ENCODE measurements at regions of chr1 and their contacts with region 1.

Region 1: GRCh38 chr1:111406321-111406768 is 21.2 kb downstream of the OVGP1 start:
- DNase-seq: peak; percentile 97
- H3K4me3 ChIP-seq: peak overlapping the region; percentile 46
- H3K27ac ChIP-seq: peak overlapping the region; percentile 94
- H3K4me1 ChIP-seq: peaks cover 61% of the 10 kb centered on the region
- CTCF ChIP-seq: no peak

Region 2: DNA sequence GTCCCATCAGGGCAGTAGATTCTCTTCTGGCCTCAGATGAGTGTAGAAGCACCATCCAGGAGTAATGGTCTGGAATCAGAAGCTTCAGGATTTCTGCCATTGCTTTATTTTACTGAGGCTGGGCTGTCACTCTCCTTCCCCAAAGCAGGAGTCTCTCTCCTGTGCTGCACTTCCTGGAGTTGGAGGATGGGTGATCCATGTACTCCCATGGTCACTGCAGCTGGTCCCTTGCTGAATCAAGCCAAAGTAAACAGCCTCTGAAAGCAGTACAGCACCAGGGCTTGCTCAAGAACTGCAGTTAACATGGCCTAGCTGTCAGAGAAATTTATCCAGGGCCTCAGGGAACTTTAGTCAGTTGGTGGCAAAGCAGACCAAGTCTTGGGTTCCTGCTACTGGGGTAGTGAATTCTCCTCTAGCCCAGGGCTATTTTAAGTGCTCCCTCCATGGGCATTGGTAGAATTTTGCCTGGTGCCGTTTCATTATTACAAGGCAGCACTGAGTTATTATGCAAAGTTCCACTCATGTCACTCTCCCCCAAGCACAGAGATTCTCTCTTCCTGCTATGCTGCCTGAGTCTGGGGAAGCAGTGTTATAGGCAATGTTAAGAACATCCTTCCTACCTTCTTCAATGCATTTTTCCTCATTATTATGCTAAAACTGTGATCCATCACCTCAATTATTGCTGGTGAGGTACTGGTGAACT is 296.0 kb before region 1 on chr1:
- CTCF ChIA-PET with region 1: no interaction called
- POLR2A ChIA-PET with region 1: no interaction called
- intact Hi-C with region 1: no loop called
- DNase-seq: no peak
- H3K4me3 ChIP-seq: no peak overlapping the region
- H3K27ac ChIP-seq: no peak overlapping the region
- H3K4me1 ChIP-seq: no peaks in the 10 kb centered on the region
- CTCF ChIP-seq: no peak

Region 3: GRCh38 chr1:111127923-111128643 is 278.3 kb before region 1 on chr1:
- CTCF ChIA-PET with region 1: no interaction called
- POLR2A ChIA-PET with region 1: interaction called, 5 read pairs
- intact Hi-C with region 1: loop called (anchors 5 kb)
- DNase-seq: peak; percentile 91
- H3K4me3 ChIP-seq: peak overlapping the region; percentile 65
- H3K27ac ChIP-seq: peak overlapping the region; percentile 98
- H3K4me1 ChIP-seq: peaks cover 95% of the 10 kb centered on the region
- CTCF ChIP-seq: no peak

Region 4: GRCh38 chr1:111448918-111449702 is 42.8 kb after region 1 on chr1 and contains the starts of genes ATP5PB and WDR77:
- CTCF ChIA-PET with region 1: no interaction called
- POLR2A ChIA-PET with region 1: interaction called, 5 read pairs
- intact Hi-C with region 1: loop called (anchors 1 kb)
- DNase-seq: peak; percentile 100
- H3K4me3 ChIP-seq: peak within 1 kb of the TSS; percentile 98
- H3K27ac ChIP-seq: peak within 1 kb of the TSS; percentile 39
- H3K4me1 ChIP-seq: peaks cover 32% of the 10 kb centered on the region
- CTCF ChIP-seq: no peak
- total RNA-seq, gene ATP5PB: 286 and 291 TPM in 2 replicates
- total RNA-seq, gene WDR77: 63.0 and 97.3 TPM in 2 replicates

Region 5: DNA sequence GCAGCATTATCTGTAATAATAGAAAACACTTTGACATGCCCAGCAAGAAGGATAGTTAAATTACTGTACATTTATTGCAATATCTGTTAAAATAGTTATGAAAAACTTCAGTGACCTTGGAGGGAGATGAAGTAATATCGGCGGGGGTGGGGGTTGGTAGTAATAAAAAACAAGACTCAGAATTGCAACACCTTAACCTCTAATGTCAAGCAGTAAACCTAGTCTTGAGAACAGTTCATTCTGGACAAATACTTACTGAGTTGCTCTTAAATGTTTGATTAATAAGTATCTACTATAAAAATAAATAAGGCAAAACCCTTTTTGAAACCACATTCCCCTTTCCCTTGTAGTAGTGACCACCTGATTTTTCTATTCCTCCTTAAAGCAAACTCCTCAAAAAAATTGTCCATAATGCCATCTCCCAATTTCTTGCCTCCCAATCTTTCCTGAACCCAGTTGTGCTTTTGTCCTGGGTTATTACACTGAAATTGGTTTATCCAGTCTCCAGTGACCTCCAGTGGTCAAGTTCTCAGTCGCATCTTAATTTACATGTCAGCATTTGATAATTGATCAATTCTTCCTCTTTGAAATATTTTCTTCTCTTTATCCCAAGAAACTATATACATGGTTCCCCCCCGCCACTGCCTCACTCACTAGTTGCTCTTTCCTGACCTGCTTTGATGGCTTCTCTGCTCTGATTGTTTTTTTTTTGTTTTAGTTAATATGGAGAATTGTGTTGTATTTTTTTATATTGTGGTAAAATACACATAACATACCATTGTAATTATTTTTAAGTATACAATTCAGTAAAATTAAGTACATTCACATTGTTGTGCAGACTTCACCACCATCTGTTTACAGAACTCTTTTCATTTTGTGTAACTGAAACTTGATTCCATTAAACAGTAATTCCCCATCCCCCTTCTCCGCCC is 250.0 kb after region 1 on chr1:
- CTCF ChIA-PET with region 1: no interaction called
- POLR2A ChIA-PET with region 1: no interaction called
- intact Hi-C with region 1: no loop called
- DNase-seq: peak; percentile 48
- H3K4me3 ChIP-seq: no peak overlapping the region
- H3K27ac ChIP-seq: no peak overlapping the region
- H3K4me1 ChIP-seq: peaks cover 13% of the 10 kb centered on the region
- CTCF ChIP-seq: peak; percentile 86

Measured in OCI-LY7 (cell line).